Activated CD4-positive, alpha-beta T cell treated with anti-CD3 and anti-CD28 coated beads for 36 hours (primary cell): ENCODE measurements at regions of chr2 and their contacts with region 1.

Region 1: GRCh38 chr2:28583899-28584553 is 88.2 kb downstream of the PLB1 start:
- DNase-seq: peak; percentile 89
- ATAC-seq: peak; percentile 96
- H3K4me3 Mint-ChIP-seq: peak overlapping the region; percentile 7
- H3K27ac Mint-ChIP-seq: peak overlapping the region; percentile 82
- H3K4me1 Mint-ChIP-seq: peaks cover 45% of the 10 kb centered on the region
- H3K27me3 Mint-ChIP-seq: peaks cover 2% of the 10 kb centered on the region

Region 2: GRCh38 chr2:28377984-28378678 is 205.9 kb before region 1 on chr2:
- CTCF ChIA-PET with region 1: no interaction called
- POLR2A ChIA-PET with region 1: no interaction called
- intact Hi-C with region 1: no loop called
- DNase-seq: peak; percentile 35
- ATAC-seq: peak; percentile 27
- H3K4me3 Mint-ChIP-seq: no peak overlapping the region
- H3K27ac Mint-ChIP-seq: no peak overlapping the region
- H3K4me1 Mint-ChIP-seq: peaks cover 20% of the 10 kb centered on the region
- H3K27me3 Mint-ChIP-seq: no peaks in the 10 kb centered on the region

Region 3: DNA sequence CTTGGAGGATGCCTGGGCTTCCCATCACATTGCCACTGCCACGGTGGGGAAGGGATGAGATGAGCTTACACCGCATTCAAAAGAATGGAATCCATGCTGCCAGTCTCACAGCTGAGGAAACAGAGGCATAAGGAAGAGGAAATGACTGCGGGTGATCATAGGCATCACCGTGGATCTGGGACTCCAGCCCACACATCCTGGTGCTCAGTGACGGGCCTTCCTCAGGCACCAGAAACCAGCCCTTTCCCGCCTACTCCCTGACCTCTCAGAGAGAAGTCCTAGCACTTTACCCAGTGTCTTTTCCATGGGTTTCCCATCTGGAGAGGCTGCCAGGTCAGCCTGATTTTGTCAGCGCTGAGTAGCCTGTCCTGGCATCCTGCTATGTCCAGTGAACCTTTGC is 93.5 kb before region 1 on chr2:
- CTCF ChIA-PET with region 1: no interaction called
- POLR2A ChIA-PET with region 1: no interaction called
- intact Hi-C with region 1: no loop called
- DNase-seq: no peak
- ATAC-seq: no peak
- H3K4me3 Mint-ChIP-seq: no peak overlapping the region
- H3K27ac Mint-ChIP-seq: no peak overlapping the region
- H3K4me1 Mint-ChIP-seq: no peaks in the 10 kb centered on the region
- H3K27me3 Mint-ChIP-seq: no peaks in the 10 kb centered on the region

Region 4: DNA sequence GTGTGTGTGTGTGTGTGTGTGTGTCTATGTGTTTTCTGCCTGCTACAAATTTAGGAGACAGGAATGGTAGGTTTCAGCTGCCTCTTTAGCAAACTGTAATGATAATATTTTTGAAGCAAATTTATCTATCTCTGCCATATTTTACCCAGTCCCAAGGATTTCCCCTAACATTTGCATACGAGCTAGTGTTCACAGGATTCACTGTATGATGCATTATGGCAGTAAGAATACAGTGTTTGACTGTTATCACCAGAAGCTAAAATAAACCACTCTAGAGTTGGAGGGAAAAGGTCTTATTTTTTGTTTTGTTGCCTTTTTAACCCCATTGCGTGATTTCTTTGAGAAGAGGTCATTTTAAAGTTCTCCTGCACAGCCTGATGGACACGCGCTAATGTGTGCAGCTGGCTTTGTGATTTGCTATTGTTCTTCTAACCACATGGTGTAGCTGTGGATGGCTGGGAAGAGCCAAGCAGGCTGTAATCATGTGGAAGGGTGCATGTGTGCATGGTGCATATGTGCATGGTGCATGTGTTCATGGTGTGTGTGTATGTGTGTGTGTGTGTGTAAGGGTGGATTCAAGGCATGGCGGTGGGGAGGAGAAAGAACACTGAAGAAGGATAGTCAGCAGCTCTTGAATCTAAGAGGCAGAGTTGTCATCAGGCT is 25.7 kb before region 1 on chr2:
- CTCF ChIA-PET with region 1: no interaction called
- POLR2A ChIA-PET with region 1: no interaction called
- intact Hi-C with region 1: no loop called
- DNase-seq: no peak
- ATAC-seq: no peak
- H3K4me3 Mint-ChIP-seq: no peak overlapping the region
- H3K27ac Mint-ChIP-seq: no peak overlapping the region
- H3K4me1 Mint-ChIP-seq: no peaks in the 10 kb centered on the region
- H3K27me3 Mint-ChIP-seq: no peaks in the 10 kb centered on the region

Region 5: DNA sequence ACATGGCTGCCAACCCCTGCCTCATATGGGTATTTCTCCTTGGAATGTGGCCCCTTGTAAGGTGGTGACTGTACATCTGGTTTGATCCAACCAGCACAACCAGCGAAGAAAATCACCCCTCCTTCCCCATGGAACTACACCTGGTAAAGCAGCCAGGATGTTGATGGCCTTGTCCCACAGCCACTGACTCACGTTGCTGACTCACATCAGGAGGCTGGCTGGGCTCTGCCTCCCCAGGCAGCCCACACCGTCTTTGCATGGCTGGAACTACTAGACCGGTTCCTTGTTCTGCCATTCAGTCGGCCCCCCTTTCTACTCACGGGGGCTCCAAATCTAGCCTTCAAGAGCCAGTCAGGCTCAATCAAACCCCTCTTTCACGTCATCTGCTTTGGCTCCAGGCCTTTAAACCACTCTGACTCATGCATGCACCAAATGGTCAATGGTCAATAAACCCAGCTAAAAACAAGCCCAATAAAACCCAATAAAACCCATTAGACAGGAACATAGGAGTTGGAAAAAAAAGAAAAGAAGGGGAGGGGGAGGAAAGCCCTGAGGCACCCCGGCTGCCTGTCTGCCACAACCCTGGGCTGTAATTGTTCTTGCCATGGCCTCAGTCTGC is 26.7 kb after region 1 on chr2:
- CTCF ChIA-PET with region 1: no interaction called
- POLR2A ChIA-PET with region 1: no interaction called
- intact Hi-C with region 1: loop called in 1 of 2 experiments (anchors 1 kb)
- DNase-seq: peak; percentile 76
- ATAC-seq: peak; percentile 71
- H3K4me3 Mint-ChIP-seq: no peak overlapping the region
- H3K27ac Mint-ChIP-seq: peak overlapping the region; percentile 9
- H3K4me1 Mint-ChIP-seq: peaks cover 25% of the 10 kb centered on the region
- H3K27me3 Mint-ChIP-seq: no peaks in the 10 kb centered on the region